IMR-90 (cell line): ENCODE measurements at regions of chr16 and their contacts with region 1.

Region 1: DNA sequence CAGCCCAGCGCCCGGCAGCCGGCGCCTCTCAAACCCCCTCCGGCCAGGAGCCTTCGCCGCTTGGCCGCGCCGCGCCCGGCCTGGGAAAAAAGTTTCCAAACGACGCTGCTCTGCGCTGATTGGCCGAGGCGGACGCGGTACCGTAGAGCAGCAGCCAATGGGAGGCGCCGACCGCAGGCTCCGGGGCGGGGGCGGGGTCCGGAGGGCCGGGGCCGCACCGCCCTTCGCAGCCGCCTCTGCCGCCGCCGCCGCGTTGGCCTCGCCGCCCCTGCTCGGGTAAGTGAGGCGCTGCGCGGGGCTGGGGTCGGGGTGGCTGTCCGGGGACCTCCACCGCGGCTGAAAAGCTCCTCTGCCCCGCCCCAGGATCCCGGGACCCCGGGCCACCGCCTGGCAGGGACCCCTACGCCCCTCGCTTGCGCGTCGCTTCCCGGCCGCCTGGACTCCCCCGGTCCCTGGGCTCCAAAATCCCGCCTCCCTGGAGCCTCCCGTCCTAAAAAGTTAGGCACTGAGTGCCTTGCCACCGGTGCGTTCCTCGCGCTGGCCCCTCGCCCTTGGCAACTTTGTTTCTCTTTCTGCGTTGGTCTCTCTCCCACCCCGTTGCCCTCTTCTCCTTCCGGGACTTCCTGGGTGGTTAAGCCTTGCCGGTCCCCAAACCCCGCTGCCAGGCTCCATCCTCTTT is at the start of gene NDE1:
- DNase-seq: peak; percentile 85
- ATAC-seq: peak; percentile 96
- H3K4me3 ChIP-seq: peak within 1 kb of the TSS; percentile 93
- H3K27ac ChIP-seq: peak within 1 kb of the TSS; percentile 73
- H3K4me1 ChIP-seq: peaks cover 6% of the 10 kb centered on the region
- H3K27me3 ChIP-seq: no peaks in the 10 kb centered on the region
- CTCF ChIP-seq: 0 out of 2 replicates have a peak, but pooled peaks have one; percentile 0
- POLR2A ChIP-seq: peak; percentile 68
- RAD21 ChIP-seq: no peak
- total RNA-seq, gene NDE1: 29.2 and 34.4 TPM in 2 replicates

Region 2: DNA sequence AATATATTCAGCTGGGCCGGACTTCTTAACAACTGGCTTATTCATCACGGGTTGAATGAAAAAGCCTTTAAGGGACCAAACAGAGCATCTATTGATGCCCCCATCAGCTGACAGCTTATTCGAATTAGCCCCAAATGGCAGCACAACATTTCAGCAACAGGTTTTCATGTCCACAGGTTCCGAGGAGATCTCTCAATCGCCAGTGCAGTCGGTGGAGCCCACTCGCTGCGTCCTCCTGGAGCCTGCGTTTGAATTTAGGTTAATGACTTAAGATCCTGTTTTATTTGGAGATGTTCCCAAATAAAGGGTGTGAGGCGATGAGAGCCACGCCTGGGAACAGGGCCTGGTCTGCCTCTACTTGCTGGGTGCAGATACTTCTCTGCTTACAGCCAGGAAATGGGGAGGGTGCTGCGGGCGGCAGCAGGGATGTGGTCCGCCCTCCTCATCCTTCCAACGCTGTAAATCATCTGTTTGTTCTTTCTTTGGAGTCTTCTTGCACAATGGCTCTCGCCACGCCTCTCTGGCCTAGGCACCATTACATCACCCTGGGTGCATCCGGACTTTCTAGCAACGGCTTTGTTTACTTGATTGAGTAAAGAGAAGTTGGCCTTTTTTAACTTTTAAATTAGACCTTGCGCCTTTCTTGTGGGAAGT is 22.5 kb after region 1 on chr16:
- CTCF ChIA-PET with region 1: no interaction called
- POLR2A ChIA-PET with region 1: no interaction called
- dilution Hi-C with region 1: no loop called
- in situ Hi-C with region 1: no loop called
- intact Hi-C with region 1: loop called (anchors 2 kb)
- DNase-seq: peak; percentile 96
- ATAC-seq: peak; percentile 99
- H3K4me3 ChIP-seq: no peak overlapping the region
- H3K27ac ChIP-seq: peak overlapping the region; percentile 64
- H3K4me1 ChIP-seq: peaks cover 11% of the 10 kb centered on the region
- H3K27me3 ChIP-seq: no peaks in the 10 kb centered on the region
- CTCF ChIP-seq: no peak
- POLR2A ChIP-seq: no peak
- RAD21 ChIP-seq: no peak

Region 3: DNA sequence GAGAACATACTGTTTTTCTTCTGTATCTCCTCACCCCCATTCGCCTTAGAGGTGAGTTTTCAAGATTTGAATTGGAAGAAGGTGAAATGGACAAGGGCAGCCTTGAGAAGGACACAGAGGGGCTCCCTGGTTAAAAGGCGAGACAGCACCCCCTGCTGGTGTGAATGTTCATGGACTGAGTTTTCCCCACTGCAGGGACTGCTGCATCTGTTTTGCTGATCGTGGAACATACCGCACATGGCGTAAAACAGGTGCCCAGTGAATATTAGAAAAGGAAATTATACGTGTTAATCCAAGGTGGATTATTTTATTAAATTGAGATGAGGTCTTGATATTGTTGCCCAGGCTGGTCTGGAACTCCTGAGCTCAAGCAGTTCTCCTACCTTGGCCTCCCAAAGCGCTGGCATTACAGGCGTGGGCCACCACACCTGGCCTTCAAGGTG is 54.4 kb after region 1 on chr16:
- CTCF ChIA-PET with region 1: no interaction called
- POLR2A ChIA-PET with region 1: no interaction called
- dilution Hi-C with region 1: no loop called
- in situ Hi-C with region 1: no loop called
- intact Hi-C with region 1: loop called (anchors 5 kb)
- DNase-seq: peak; percentile 69
- ATAC-seq: peak; percentile 73
- H3K4me3 ChIP-seq: no peak overlapping the region
- H3K27ac ChIP-seq: no peak overlapping the region
- H3K4me1 ChIP-seq: peaks cover 8% of the 10 kb centered on the region
- H3K27me3 ChIP-seq: no peaks in the 10 kb centered on the region
- CTCF ChIP-seq: peak; percentile 78
- POLR2A ChIP-seq: no peak
- RAD21 ChIP-seq: peak; percentile 81

Region 4: GRCh38 chr16:15777533-15778203 is 127.5 kb after region 1 on chr16:
- CTCF ChIA-PET with region 1: no interaction called
- POLR2A ChIA-PET with region 1: no interaction called
- dilution Hi-C with region 1: no loop called
- in situ Hi-C with region 1: no loop called
- intact Hi-C with region 1: no loop called
- DNase-seq: peak; percentile 61
- ATAC-seq: peak; percentile 75
- H3K4me3 ChIP-seq: no peak overlapping the region
- H3K27ac ChIP-seq: no peak overlapping the region
- H3K4me1 ChIP-seq: no peaks in the 10 kb centered on the region; the same call in 1 of the 2 replicates
- H3K27me3 ChIP-seq: peaks cover 9% of the 10 kb centered on the region
- CTCF ChIP-seq: peak; percentile 61
- POLR2A ChIP-seq: no peak
- RAD21 ChIP-seq: peak; percentile 80

Region 5: GRCh38 chr16:16197847-16198365 is 547.7 kb after region 1 on chr16:
- CTCF ChIA-PET with region 1: no interaction called
- POLR2A ChIA-PET with region 1: no interaction called
- dilution Hi-C with region 1: no loop called
- in situ Hi-C with region 1: no loop called
- intact Hi-C with region 1: loop called (anchors 5 kb)
- DNase-seq: no peak
- ATAC-seq: no peak
- H3K4me3 ChIP-seq: no peak overlapping the region
- H3K27ac ChIP-seq: no peak overlapping the region
- H3K4me1 ChIP-seq: peaks cover 2% of the 10 kb centered on the region
- H3K27me3 ChIP-seq: peaks cover 5% of the 10 kb centered on the region; the same call in 1 of the 2 replicates
- CTCF ChIP-seq: no peak
- POLR2A ChIP-seq: no peak
- RAD21 ChIP-seq: no peak